Aorta (tissue), 5 donors: ENCODE measurements at regions of chr15 and their contacts with region 1.

Region 1: GRCh38 chr15:71212146-71212545 is 96.9 kb downstream of the THSD4 start:
- DNase-seq: no peak
- ATAC-seq: no peak
- H3K4me3 ChIP-seq: no peak overlapping the region
- H3K27ac ChIP-seq: peak overlapping the region in 1 of 2 donors; percentile 12
- H3K4me1 ChIP-seq: peaks cover 0 to 8% of the 10 kb centered on the region in 2 donors
- H3K27me3 ChIP-seq: no peaks in the 10 kb centered on the region

Region 2: GRCh38 chr15:71125831-71126453 is 86.2 kb before region 1 on chr15:
- intact Hi-C with region 1: loop called in 1 of 2 experiments (anchors 5 kb)
- DNase-seq: no peak
- ATAC-seq: peak; percentile 62
- H3K4me3 ChIP-seq: no peak overlapping the region
- H3K27ac ChIP-seq: peak overlapping the region; percentile 89 to 96
- H3K4me1 ChIP-seq: peaks cover 0 to 4% of the 10 kb centered on the region in 2 donors
- H3K27me3 ChIP-seq: no peaks in the 10 kb centered on the region

Region 3: GRCh38 chr15:71182522-71182921 is 29.6 kb before region 1 on chr15:
- intact Hi-C with region 1: no loop called
- DNase-seq: no peak
- ATAC-seq: no peak
- H3K4me3 ChIP-seq: no peak overlapping the region
- H3K27ac ChIP-seq: no peak overlapping the region
- H3K4me1 ChIP-seq: peaks cover 0 to 2% of the 10 kb centered on the region in 2 donors
- H3K27me3 ChIP-seq: no peaks in the 10 kb centered on the region